PC-9 (cell line): ENCODE measurements at regions of chr1 and their contacts with region 1.

Region 1: GRCh38 chr1:231866392-231867331 is 240.1 kb downstream of the DISC1 start:
- DNase-seq: peak in 1 of 2 experiments; percentile 30
- H3K4me3 ChIP-seq: no peak overlapping the region
- H3K27ac ChIP-seq: no peak overlapping the region
- H3K4me1 ChIP-seq: no peaks in the 10 kb centered on the region
- H3K27me3 ChIP-seq: no peaks in the 10 kb centered on the region
- CTCF ChIP-seq: peak; percentile 92

Region 2: GRCh38 chr1:231757101-231757404 is 109.6 kb before region 1 on chr1:
- CTCF ChIA-PET with region 1: no interaction called
- POLR2A ChIA-PET with region 1: interaction called, 4 read pairs
- intact Hi-C with region 1: loop called (anchors 1 kb)
- DNase-seq: no peak
- H3K4me3 ChIP-seq: no peak overlapping the region
- H3K27ac ChIP-seq: no peak overlapping the region
- H3K4me1 ChIP-seq: no peaks in the 10 kb centered on the region
- H3K27me3 ChIP-seq: no peaks in the 10 kb centered on the region
- CTCF ChIP-seq: peak; percentile 42; the same call in 1 of the 2 replicates

Region 3: GRCh38 chr1:231778009-231778719 is 88.5 kb before region 1 on chr1:
- CTCF ChIA-PET with region 1: no interaction called
- POLR2A ChIA-PET with region 1: interaction called, 10 read pairs
- intact Hi-C with region 1: no loop called
- DNase-seq: peak; percentile 78 to 86
- H3K4me3 ChIP-seq: no peak overlapping the region; the same call in 1 of the 2 replicates
- H3K27ac ChIP-seq: peak overlapping the region; percentile 76
- H3K4me1 ChIP-seq: peaks cover 36% of the 10 kb centered on the region
- H3K27me3 ChIP-seq: no peaks in the 10 kb centered on the region
- CTCF ChIP-seq: no peak

Region 4: GRCh38 chr1:231828182-231828920 is 38.3 kb before region 1 on chr1:
- CTCF ChIA-PET with region 1: no interaction called
- POLR2A ChIA-PET with region 1: no interaction called
- intact Hi-C with region 1: loop called (anchors 2 kb)
- DNase-seq: peak; percentile 71 to 96
- H3K4me3 ChIP-seq: peak overlapping the region; percentile 19; the same call in 1 of the 2 replicates
- H3K27ac ChIP-seq: peak overlapping the region; percentile 89
- H3K4me1 ChIP-seq: peaks cover 38% of the 10 kb centered on the region
- H3K27me3 ChIP-seq: no peaks in the 10 kb centered on the region
- CTCF ChIP-seq: no peak

Region 5: DNA sequence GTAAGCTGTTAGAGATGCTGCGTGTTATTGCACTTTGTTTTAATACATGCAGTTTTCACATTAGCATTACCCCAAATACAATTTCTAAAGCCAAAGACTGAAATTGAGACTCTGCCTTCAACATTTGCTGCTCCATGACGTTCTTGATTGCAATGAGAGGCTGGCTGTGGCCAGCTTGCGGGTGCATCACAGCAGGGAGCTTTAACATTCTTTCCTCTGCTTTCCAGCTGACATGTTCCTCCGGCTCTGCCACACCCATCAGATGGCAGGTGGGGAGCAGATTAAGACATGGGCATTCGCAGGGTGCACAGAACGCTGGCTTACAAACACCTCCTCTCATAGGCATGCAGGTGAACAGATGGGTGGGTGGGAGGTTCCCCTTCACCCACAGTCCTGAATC is 74.0 kb after region 1 on chr1:
- CTCF ChIA-PET with region 1: no interaction called
- POLR2A ChIA-PET with region 1: no interaction called
- intact Hi-C with region 1: no loop called
- DNase-seq: no peak
- H3K4me3 ChIP-seq: no peak overlapping the region
- H3K27ac ChIP-seq: no peak overlapping the region
- H3K4me1 ChIP-seq: no peaks in the 10 kb centered on the region
- H3K27me3 ChIP-seq: no peaks in the 10 kb centered on the region
- CTCF ChIP-seq: no peak